ENCODE measurements at regions of chr12 and their contacts with region 1.

Region 1: DNA sequence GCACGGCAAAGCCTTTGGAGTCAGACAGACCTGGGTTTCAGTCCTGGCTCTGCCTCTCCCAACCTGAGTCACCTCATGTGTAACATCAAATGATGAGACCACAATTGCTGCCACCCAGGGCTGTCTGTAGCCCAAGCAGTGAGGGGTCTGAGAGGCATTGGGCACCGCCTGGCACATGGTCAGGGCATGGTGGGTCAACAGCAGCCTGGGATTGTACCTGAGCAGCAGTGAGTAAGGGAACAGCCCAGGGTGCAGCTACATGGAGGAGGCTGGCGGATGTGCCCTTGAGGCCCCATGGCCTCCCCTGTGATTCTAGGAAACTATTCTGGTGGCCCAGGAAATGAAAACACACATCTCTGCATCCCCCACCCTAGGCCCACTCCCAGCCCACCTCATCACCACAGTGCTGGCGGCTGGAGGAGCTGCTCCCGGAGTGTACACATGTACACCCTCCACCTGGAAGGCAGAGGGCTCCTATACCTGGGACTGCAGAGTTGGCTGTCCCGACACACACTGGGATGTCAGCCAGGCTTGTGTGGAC is 7.7 kb downstream of the ANKRD33 start:
- DNase-seq: peak in 1 of 10 donors; percentile 67

Region 2: DNA sequence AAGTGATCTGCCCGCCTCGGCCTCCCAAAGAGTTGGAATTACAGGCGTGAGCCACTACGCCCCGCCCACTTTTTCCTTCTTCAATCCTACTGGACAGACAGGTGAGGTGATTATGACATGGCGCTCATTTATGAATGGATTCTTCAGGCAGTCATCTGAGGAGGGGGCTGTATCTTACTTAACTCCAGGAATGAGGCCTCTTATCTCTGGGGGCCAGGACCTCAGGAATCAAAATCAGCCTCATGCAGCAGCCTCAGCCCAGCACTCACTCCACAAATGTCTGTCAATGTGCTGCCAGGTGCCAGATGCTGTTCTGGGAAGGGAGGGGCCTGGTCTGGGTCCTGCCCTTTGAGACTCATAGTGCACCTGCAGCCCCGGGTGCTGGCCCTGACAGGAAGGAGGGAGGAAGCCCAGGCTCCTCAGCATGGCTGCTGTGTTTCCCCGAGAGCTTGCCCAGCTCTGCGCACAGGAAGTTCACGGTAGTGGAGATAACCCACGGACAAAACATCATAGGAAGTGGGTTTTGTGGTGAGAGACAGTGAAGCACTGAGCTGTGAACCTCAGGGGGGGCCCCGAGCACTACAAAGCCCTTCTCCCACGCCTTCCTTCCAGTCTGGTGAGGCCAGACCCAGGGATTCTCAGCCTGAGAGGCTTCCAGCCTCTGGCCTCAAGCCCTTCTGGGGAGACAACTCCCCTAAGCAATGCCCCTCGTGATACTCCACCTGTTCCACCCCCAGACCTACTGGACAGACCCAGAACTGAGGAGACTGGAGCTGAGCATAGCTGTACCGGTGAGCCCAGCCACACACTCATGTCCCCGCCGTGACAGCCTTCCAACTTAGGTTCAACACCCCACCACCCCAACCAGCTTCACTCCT is 526.7 kb before region 1 on chr12:
- intact Hi-C with region 1: no loop called
- DNase-seq: peak in 2 of 10 donors; percentile 61 to 67

Region 3: GRCh38 chr12:51759175-51759574 is 136.4 kb before region 1 on chr12:
- intact Hi-C with region 1: no loop called
- DNase-seq: no peak

Region 4: DNA sequence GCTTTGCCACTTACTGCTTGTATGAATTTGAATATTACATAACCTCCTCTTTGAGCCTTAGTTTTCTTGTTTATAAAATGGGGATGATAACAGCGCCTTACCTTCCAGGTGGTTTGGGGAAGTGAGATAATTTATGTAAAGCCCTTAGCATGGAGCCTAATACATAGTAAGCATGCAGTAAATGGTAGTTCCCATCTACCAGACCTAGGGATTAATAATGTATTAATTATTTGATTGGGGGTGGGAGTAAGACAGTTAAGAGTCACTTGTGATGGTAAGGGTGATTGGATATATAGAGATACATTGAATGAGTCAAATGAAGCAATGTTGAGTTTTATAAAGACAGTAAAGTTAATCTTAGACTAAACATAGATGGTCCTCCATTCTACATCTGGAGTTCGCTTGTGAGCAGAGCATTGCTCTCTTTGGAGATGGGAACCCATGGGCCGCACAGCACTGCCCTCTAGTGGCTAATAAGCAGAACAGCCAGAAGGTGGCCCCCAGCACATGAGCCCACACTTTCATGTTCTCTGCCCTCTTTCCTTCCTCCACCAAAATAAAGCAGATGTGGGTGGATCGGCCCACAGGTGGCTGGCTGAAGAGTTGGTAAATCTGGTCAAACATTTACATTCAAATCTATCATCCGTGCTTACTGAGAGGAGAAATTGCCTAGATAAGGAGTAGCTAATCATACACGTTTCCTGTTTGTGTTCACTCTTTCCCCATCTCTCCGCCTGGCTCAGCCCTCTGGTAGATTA is 84.7 kb after region 1 on chr12:
- intact Hi-C with region 1: loop called (anchors 1 kb)
- DNase-seq: peak; percentile 38 to 96 (median 64)

Measured in posterior cingulate gyrus (tissue), 11 donors.